ENCODE measurements at regions of chr4 and their contacts with region 1.

Region 1: DNA sequence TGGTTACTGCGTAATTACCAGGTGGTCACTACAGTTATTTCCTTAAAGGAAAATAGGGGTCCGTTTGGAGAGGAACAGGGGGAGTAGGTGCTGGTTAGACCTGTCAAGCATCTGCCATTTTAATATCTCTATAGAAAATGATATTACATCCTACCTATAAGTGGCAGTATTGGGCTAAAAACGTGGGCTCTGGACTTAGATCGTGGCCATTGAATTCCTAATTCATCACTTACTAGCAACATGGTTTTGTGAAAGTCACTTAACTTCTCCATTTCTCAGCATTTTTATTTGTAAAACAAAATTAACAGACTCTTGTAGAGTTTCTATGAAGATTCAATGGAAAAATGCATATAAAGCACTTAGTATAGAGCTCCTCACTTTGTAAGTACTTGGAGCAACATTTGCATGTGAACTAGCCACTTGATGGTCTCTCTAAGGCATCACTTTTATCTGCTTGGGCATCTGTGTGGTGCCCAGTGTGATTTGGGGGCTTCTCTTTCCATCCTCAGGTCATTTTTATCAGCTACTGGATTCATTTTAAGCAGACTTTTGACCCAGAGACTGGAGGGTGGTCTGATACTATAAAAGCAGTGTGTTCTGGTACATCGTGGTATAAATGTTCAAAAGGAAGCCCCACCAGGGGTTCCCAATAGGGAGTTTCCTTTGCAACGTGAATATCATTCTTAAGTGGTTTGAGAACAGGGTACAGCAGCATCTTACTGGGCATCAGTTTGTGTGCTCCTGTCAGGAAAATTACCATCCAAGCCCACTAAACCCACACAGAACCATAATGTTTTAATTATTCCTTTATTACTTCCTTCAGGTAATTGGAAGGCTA is 42.7 kb upstream of the RASSF6 start:
- DNase-seq: no peak
- ATAC-seq: peak in 3 of 4 donors; percentile 52 to 70 (median 55)
- H3K4me3 ChIP-seq: no peak overlapping the region
- H3K27ac ChIP-seq: no peak overlapping the region
- H3K4me1 ChIP-seq: no peaks in the 10 kb centered on the region
- H3K27me3 ChIP-seq: no peaks in the 10 kb centered on the region
- CTCF ChIP-seq: peak; percentile 55

Region 2: DNA sequence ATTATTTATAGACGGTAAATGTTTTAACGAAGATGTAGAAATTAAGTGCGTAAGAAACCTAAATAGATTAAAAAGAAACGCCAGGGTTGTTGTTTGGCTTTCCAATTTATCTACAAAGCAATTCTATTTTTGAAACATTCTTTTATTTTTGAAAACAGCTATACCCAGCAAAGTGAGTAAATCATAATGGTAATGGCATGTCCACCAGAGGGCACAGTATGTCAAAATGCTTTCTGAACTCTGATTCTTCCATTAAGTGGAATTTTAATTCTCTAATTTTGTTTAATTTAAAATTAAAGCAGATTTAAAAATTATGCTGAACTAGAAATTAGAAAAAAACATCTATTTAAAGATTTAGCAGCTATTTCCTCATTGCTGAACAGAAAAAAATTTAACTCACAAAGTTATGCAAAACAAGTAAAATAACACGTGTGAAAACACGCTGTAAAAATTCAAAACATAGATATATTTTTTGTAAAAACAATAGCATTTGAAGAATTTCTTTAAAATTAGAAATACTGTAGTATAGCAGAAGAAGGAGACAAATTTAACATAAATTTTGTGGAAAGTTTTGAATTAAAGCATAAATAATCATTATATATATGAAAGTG is 69.2 kb before region 1 on chr4:
- intact Hi-C with region 1: no loop called
- DNase-seq: no peak
- ATAC-seq: no peak
- H3K4me3 ChIP-seq: no peak overlapping the region
- H3K27ac ChIP-seq: no peak overlapping the region
- H3K4me1 ChIP-seq: no peaks in the 10 kb centered on the region
- H3K27me3 ChIP-seq: no peaks in the 10 kb centered on the region
- CTCF ChIP-seq: peak; percentile 33

Region 3: DNA sequence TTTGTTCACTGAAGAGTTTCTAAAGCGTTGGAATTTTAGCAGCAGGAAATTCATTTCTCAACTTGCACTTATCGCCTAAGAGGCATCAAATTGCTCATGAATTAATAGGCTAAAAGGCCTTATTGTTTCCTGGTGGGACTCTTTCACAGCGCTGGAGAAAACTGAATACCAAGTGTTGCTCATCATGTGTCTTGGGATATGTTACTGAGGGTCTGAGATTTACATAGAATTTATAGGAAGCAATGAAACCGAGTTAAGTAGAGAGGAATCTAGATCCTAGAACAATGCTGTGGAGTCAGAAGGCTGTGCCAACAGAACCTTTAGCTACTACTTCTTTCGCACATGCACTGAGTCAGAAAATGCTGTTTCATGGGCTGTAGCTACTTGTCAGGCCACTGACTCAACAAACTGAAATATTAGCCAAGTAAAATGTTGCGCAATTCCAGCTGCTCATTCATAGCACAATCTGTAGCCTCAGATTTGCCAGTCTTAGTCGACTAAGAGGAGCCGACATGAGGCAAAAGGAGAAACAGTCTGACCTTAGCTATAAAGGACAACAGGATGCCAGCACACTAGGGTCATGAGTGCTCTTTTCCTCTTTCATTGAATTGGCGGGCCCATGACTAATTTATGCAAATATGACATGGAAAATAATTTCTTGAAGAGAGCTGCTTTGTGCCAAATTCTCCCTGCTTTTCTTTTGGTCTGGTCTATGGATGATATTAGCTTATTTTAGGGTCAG is 41.6 kb after region 1 on chr4:
- intact Hi-C with region 1: no loop called
- DNase-seq: peak; percentile 15 to 57
- ATAC-seq: peak; percentile 89 to 98 (median 95)
- H3K4me3 ChIP-seq: no peak overlapping the region
- H3K27ac ChIP-seq: peak overlapping the region; percentile 72
- H3K4me1 ChIP-seq: peaks cover 14% of the 10 kb centered on the region
- H3K27me3 ChIP-seq: no peaks in the 10 kb centered on the region
- CTCF ChIP-seq: no peak

Region 4: GRCh38 chr4:73864365-73864764 is 201.4 kb after region 1 on chr4:
- intact Hi-C with region 1: loop called in 1 of 2 experiments (anchors 5 kb)
- DNase-seq: no peak
- ATAC-seq: no peak
- H3K4me3 ChIP-seq: no peak overlapping the region
- H3K27ac ChIP-seq: no peak overlapping the region
- H3K4me1 ChIP-seq: no peaks in the 10 kb centered on the region
- H3K27me3 ChIP-seq: peaks cover 0 to 7% (median 5%) of the 10 kb centered on the region in 3 donors
- CTCF ChIP-seq: peak; percentile 26

Region 5: GRCh38 chr4:73922766-73923630 is 260.1 kb after region 1 on chr4:
- intact Hi-C with region 1: loop called in 1 of 2 experiments (anchors 5 kb)
- DNase-seq: no peak
- ATAC-seq: no peak
- H3K4me3 ChIP-seq: no peak overlapping the region
- H3K27ac ChIP-seq: no peak overlapping the region
- H3K4me1 ChIP-seq: no peaks in the 10 kb centered on the region
- H3K27me3 ChIP-seq: peaks cover 0 to 2% (median 0%) of the 10 kb centered on the region in 3 donors
- CTCF ChIP-seq: no peak

Region 6: DNA sequence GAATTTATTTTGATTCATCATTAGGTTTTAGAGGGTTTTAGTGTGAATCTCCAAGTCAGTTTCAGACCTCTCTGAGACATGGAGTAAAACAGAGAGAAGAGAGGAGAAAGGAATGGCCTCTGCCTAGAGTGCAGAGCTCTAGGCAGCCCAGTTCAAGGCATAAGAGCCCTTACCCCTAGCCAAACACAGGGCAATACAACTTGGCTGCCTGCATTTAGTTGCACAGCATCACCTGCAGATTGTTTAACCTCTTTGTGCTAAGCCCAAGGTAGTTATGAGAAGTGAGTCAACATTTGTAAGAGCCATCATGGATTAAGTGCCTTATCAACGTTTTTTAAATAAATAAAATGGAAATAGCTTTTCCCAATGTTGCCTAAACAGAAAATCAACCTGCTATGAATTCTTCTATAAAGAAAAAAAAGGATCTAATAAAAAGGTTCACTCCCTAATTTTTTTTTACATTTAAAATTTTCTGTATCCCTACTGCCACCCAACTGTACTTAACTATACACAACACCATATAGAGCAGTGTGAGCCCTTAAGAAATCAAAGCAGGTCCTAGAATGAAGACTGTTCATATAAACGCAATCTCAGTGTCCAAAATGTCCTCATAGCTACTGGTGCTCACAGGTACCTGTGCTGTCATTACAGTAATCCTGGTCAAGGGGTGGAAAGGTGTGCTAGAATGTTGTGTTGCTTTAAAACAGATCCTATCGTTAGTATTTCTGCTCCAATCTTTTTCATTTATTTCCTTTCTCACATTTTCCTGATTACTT is 282.9 kb after region 1 on chr4:
- intact Hi-C with region 1: no loop called
- DNase-seq: no peak
- ATAC-seq: no peak
- H3K4me3 ChIP-seq: no peak overlapping the region
- H3K27ac ChIP-seq: no peak overlapping the region
- H3K4me1 ChIP-seq: no peaks in the 10 kb centered on the region
- H3K27me3 ChIP-seq: peaks cover 0 to 40% (median 6%) of the 10 kb centered on the region in 3 donors
- CTCF ChIP-seq: no peak

Region 7: DNA sequence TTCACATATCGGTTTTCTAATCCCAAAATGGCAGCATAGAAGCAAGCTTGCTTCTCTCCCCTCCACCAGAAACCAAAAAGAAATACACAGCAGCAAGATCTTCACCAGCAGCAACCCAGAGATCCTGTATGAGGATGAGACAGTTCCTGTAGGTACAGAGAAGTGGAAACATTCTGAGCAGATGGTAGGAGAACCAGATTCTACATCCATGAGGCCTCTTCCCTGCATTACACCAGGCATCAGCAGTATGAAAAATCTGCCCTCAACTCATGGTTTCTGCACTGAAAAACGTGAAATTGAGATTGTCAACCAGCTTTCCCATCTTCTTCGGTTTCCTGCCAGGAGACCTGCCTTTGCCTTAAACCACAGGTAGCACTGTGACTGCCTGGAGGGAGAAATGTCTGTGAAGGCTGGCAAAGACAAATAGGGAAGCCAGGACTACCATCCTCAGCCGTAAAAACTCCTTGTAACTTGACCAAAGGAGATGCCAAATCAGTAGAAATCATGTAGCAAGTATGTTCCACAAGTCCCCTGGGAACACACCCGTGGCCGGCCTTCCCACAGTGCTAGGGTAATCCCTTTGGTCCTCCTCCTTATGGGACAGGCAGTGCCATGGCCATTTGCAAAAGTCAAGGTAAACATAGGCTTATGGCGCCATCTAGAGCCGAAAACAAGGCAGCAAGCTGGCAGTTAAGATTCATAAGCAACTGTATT is 471.0 kb after region 1 on chr4:
- intact Hi-C with region 1: loop called (anchors 5 kb)
- DNase-seq: peak; percentile 65 to 72
- ATAC-seq: peak; percentile 46 to 83 (median 80)
- H3K4me3 ChIP-seq: no peak overlapping the region
- H3K27ac ChIP-seq: no peak overlapping the region
- H3K4me1 ChIP-seq: no peaks in the 10 kb centered on the region
- H3K27me3 ChIP-seq: no peaks in the 10 kb centered on the region
- CTCF ChIP-seq: peak; percentile 70